ENCODE measurements at regions of chr6 and their contacts with region 1.

Region 1: DNA sequence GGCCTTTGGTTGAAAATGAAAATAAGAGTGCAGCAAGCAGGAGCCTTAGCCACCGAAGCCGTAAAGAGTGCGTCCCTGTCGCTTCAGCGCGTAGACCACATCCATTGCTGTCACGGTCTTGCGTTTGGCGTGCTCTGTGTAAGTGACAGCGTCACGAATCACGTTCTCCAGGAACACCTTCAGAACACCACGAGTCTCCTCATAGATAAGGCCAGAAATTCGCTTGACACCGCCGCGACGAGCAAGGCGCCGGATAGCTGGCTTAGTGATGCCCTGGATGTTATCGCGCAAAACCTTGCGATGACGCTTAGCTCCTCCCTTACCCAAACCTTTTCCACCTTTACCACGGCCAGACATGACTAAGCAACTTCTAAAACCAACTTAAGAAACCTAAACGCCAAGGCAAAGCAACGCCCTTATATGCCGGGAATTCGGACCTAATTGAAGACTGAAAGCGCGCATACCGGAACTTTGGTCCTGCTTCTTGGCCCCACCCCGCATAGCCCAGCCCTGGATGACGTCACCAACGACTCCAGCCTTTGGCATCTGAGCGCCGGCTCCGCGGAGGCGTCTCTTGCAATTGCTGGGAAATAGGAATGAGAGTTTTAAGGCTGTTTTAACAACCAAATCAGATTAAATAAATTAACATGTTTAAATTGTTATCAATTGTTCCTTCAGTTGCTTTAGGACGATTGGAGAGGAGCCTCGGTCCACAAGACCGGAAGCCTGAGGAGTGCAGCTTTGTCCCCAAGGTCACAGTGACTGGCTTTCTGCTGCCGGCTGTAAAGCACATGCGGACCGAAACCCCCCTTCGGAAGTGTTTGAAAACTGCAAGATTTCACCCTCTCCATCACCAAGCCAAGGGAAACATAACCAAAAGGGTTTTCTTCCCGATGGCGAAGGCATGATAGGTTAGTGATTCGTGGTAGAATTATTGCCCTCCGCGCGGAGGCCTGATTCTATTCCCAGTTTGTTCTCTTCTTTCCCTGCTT is 79.6 kb upstream of the BTN3A2 start:
- DNase-seq: peak; percentile 95 to 97 (median 96)
- H3K4me3 ChIP-seq: peak overlapping the region; percentile 69 to 97 (median 84)
- H3K4me3 Mint-ChIP-seq: peak overlapping the region; percentile 82 to 95
- H3K27ac ChIP-seq: peak overlapping the region; percentile 88 to 97
- H3K27ac Mint-ChIP-seq: peak overlapping the region; percentile 97 to 99 (median 98)
- H3K4me1 ChIP-seq: peaks cover 14 to 16% of the 10 kb centered on the region in 2 donors
- H3K4me1 Mint-ChIP-seq: peaks cover 23% of the 10 kb centered on the region
- H3K27me3 ChIP-seq: no peaks in the 10 kb centered on the region
- H3K27me3 Mint-ChIP-seq: peaks cover 0 to 2% (median 2%) of the 10 kb centered on the region in 3 donors
- CTCF ChIP-seq: no peak

Region 2: GRCh38 chr6:26196846-26197648 is 88.4 kb before region 1 on chr6:
- intact Hi-C with region 1: loop called in 1 of 2 experiments (anchors 5 kb)
- DNase-seq: peak; percentile 85 to 87 (median 87)
- H3K4me3 ChIP-seq: peak overlapping the region; percentile 53 to 93 (median 64)
- H3K4me3 Mint-ChIP-seq: peak overlapping the region; percentile 94 to 98
- H3K27ac ChIP-seq: peak overlapping the region; percentile 81 to 88
- H3K27ac Mint-ChIP-seq: peak overlapping the region; percentile 92 to 98 (median 96)
- H3K4me1 ChIP-seq: peaks cover 37 to 55% of the 10 kb centered on the region in 2 donors
- H3K4me1 Mint-ChIP-seq: peaks cover 34% of the 10 kb centered on the region
- H3K27me3 ChIP-seq: no peaks in the 10 kb centered on the region
- H3K27me3 Mint-ChIP-seq: no peaks in the 10 kb centered on the region
- CTCF ChIP-seq: no peak